ENCODE measurements at regions of chr4 and their contacts with region 1.

Region 1: GRCh38 chr4:120977435-120977997 is 55.0 kb upstream of the PRDM5 start:
- DNase-seq: peak; percentile 39 to 46
- H3K4me3 ChIP-seq: no peak overlapping the region
- H3K4me3 Mint-ChIP-seq: no peak overlapping the region
- H3K27ac Mint-ChIP-seq: no peak overlapping the region
- H3K4me1 ChIP-seq: no peaks in the 10 kb centered on the region
- H3K4me1 Mint-ChIP-seq: no peaks in the 10 kb centered on the region
- H3K27me3 ChIP-seq: no peaks in the 10 kb centered on the region
- H3K27me3 Mint-ChIP-seq: no peaks in the 10 kb centered on the region
- CTCF ChIP-seq: peak; percentile 45 to 62

Region 2: DNA sequence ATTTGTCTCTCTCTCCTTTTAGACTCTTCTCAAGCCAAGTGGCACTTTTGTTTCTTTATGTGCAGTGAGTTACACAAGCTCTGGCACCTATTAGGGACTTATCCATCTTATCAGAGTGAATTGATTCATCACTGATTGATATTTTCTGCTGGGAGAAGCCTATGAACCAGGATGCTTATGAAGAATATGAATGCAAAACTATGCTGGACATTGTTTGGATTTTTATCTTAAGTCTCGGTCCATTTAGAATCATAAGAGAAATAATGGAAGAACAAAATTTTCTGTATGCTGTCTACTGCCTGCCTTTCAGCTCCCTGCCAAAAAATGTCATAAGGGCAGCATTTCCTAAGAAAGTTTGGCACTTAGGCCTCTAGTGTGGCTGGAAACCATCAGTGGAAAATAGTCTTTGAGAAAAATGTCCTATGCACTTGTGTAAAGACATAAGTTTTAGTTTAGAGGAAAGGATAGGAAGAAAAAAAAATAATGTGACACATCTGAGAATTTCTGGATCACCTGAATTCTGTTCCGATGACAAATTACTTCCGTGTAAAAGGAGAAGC is 545.1 kb before region 1 on chr4:
- CTCF ChIA-PET with region 1: no interaction called
- POLR2A ChIA-PET with region 1: no interaction called
- intact Hi-C with region 1: no loop called
- DNase-seq: no peak
- H3K4me3 ChIP-seq: no peak overlapping the region
- H3K4me3 Mint-ChIP-seq: no peak overlapping the region
- H3K27ac Mint-ChIP-seq: no peak overlapping the region
- H3K4me1 ChIP-seq: no peaks in the 10 kb centered on the region
- H3K4me1 Mint-ChIP-seq: no peaks in the 10 kb centered on the region
- H3K27me3 ChIP-seq: no peaks in the 10 kb centered on the region
- H3K27me3 Mint-ChIP-seq: no peaks in the 10 kb centered on the region
- CTCF ChIP-seq: no peak

Region 3: DNA sequence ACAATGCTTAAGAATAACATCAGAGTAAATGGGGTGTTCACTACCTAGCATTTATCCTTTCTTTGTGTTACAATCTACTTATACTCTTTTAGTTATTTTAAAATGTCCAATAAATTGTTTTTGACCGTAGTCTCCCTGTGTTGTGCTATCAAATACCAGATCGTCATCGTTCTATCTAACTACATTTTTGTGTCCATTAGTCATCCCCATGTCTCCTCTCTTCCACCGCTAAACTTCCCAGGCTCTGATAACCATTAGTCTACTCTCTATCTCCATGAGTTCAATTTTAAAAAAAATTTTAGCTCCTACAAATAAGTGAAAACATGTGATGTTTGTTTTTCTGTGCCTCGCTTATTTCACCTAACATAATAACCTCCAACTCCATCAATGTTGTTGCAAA is 436.9 kb before region 1 on chr4:
- CTCF ChIA-PET with region 1: no interaction called
- POLR2A ChIA-PET with region 1: no interaction called
- intact Hi-C with region 1: no loop called
- DNase-seq: no peak
- H3K4me3 ChIP-seq: no peak overlapping the region
- H3K4me3 Mint-ChIP-seq: no peak overlapping the region
- H3K27ac Mint-ChIP-seq: no peak overlapping the region
- H3K4me1 ChIP-seq: no peaks in the 10 kb centered on the region
- H3K4me1 Mint-ChIP-seq: no peaks in the 10 kb centered on the region
- H3K27me3 ChIP-seq: no peaks in the 10 kb centered on the region
- H3K27me3 Mint-ChIP-seq: no peaks in the 10 kb centered on the region
- CTCF ChIP-seq: no peak

Region 4: GRCh38 chr4:120718979-120719566 is 258.4 kb before region 1 on chr4:
- CTCF ChIA-PET with region 1: interaction called, 3 read pairs
- POLR2A ChIA-PET with region 1: no interaction called
- intact Hi-C with region 1: loop called (anchors 2 kb)
- DNase-seq: peak in 1 of 2 experiments; percentile 46
- H3K4me3 ChIP-seq: no peak overlapping the region
- H3K4me3 Mint-ChIP-seq: no peak overlapping the region
- H3K27ac Mint-ChIP-seq: no peak overlapping the region
- H3K4me1 ChIP-seq: no peaks in the 10 kb centered on the region
- H3K4me1 Mint-ChIP-seq: peaks cover 19% of the 10 kb centered on the region
- H3K27me3 ChIP-seq: no peaks in the 10 kb centered on the region
- H3K27me3 Mint-ChIP-seq: no peaks in the 10 kb centered on the region
- CTCF ChIP-seq: peak; percentile 61 to 73

Region 5: GRCh38 chr4:120843849-120844527 is 133.5 kb before region 1 on chr4:
- CTCF ChIA-PET with region 1: interaction called, 12 read pairs
- POLR2A ChIA-PET with region 1: no interaction called
- intact Hi-C with region 1: no loop called
- DNase-seq: peak; percentile 38 to 42
- H3K4me3 ChIP-seq: no peak overlapping the region
- H3K4me3 Mint-ChIP-seq: no peak overlapping the region
- H3K27ac Mint-ChIP-seq: no peak overlapping the region
- H3K4me1 ChIP-seq: no peaks in the 10 kb centered on the region
- H3K4me1 Mint-ChIP-seq: no peaks in the 10 kb centered on the region
- H3K27me3 ChIP-seq: no peaks in the 10 kb centered on the region
- H3K27me3 Mint-ChIP-seq: no peaks in the 10 kb centered on the region
- CTCF ChIP-seq: peak; percentile 38 to 65

Region 6: GRCh38 chr4:121070696-121071639 is 93.5 kb after region 1 on chr4:
- CTCF ChIA-PET with region 1: no interaction called
- POLR2A ChIA-PET with region 1: no interaction called
- intact Hi-C with region 1: no loop called
- DNase-seq: peak; percentile 63 to 66
- H3K4me3 ChIP-seq: peak overlapping the region; percentile 52
- H3K4me3 Mint-ChIP-seq: peak overlapping the region; percentile 89
- H3K27ac Mint-ChIP-seq: no peak overlapping the region
- H3K4me1 ChIP-seq: peaks cover 6% of the 10 kb centered on the region; the same call in 1 of the 2 replicates
- H3K4me1 Mint-ChIP-seq: peaks cover 29% of the 10 kb centered on the region
- H3K27me3 ChIP-seq: peaks cover 1% of the 10 kb centered on the region; the same call in 1 of the 2 replicates
- H3K27me3 Mint-ChIP-seq: peaks cover 30% of the 10 kb centered on the region
- CTCF ChIP-seq: peak; percentile 28 to 37